OCI-LY7 (cell line): ENCODE measurements at regions of chr2 and their contacts with region 1.

Region 1: DNA sequence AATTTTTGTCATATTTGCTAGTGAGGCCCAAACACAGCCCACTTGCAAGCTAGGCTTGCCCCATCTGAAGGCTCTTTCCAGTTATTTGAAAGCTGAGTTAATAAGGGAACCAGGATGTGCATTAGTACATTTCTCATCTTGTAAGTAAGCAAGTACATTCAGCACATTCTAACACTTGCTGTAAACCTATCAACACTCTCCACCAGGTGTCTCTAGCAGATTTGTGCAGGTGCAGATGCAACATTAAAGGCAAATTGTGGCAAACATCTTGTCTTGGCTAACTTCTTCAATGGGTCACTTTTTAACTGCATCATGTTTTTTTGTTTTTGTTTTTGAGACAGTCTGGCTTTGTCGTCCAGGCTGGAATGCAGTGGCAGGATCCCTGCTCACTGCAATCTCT is 25.3 kb upstream of the MFSD6 start:
- DNase-seq: peak; percentile 64
- H3K4me3 ChIP-seq: no peak overlapping the region
- H3K27ac ChIP-seq: no peak overlapping the region
- H3K4me1 ChIP-seq: no peaks in the 10 kb centered on the region
- CTCF ChIP-seq: peak; percentile 80

Region 2: GRCh38 chr2:190511104-190511503 is 128.3 kb after region 1 on chr2:
- CTCF ChIA-PET with region 1: no interaction called
- POLR2A ChIA-PET with region 1: no interaction called
- intact Hi-C with region 1: loop called (anchors 1 kb)
- DNase-seq: peak; percentile 7
- H3K4me3 ChIP-seq: no peak overlapping the region
- H3K27ac ChIP-seq: no peak overlapping the region
- H3K4me1 ChIP-seq: peaks cover 13% of the 10 kb centered on the region
- CTCF ChIP-seq: peak; percentile 70

Region 3: GRCh38 chr2:190679813-190680591 is 297.2 kb after region 1 on chr2:
- CTCF ChIA-PET with region 1: no interaction called
- POLR2A ChIA-PET with region 1: no interaction called
- intact Hi-C with region 1: loop called (anchors 2 kb)
- DNase-seq: peak; percentile 24
- H3K4me3 ChIP-seq: no peak overlapping the region
- H3K27ac ChIP-seq: no peak overlapping the region
- H3K4me1 ChIP-seq: no peaks in the 10 kb centered on the region
- CTCF ChIP-seq: peak; percentile 79

Region 4: GRCh38 chr2:190804182-190804795 is 421.4 kb after region 1 on chr2:
- CTCF ChIA-PET with region 1: no interaction called
- POLR2A ChIA-PET with region 1: no interaction called
- intact Hi-C with region 1: loop called (anchors 5 kb)
- DNase-seq: no peak
- H3K4me3 ChIP-seq: no peak overlapping the region
- H3K27ac ChIP-seq: no peak overlapping the region
- H3K4me1 ChIP-seq: no peaks in the 10 kb centered on the region
- CTCF ChIP-seq: peak; percentile 69